GM10248 (cell line): ENCODE measurements at regions of chr21 and their contacts with region 1.

Region 1: DNA sequence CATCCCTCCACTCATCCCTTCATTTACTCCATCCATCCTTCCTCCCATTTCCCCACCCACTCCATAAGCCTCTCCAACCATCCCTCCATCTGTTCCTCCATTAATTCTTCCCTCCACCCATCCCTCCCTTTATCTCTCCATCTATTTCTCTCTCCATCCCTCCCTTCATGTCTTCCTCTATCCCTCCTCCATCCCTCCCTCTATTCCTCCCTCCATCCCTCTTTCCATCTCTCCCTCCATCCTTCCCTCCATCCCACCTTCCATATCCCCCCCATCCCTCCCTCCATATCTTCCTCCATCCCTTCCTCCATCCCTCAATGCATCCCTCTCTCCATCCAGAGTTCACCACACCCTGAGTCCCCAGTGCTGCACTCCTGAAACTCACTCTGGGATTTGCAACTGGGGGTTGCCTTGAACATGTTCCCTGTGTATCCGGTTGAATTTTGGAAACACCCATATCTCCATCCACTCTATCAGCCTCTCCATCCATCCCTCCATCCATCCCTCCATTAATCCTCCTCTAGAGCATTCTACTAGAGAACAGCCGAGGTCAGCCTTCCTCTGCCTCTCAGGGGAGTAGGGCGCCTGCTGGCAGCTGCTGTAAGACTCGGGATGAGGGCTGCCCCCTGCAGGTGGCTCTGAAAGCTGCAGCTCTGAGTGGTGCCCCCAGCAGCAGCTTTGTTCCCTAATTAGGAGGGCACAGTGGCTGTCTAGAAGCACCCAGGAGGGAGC is 39.4 kb downstream of the ABCG1 start:
- DNase-seq: peak; percentile 90
- CTCF ChIP-seq: peak; percentile 91

Region 2: DNA sequence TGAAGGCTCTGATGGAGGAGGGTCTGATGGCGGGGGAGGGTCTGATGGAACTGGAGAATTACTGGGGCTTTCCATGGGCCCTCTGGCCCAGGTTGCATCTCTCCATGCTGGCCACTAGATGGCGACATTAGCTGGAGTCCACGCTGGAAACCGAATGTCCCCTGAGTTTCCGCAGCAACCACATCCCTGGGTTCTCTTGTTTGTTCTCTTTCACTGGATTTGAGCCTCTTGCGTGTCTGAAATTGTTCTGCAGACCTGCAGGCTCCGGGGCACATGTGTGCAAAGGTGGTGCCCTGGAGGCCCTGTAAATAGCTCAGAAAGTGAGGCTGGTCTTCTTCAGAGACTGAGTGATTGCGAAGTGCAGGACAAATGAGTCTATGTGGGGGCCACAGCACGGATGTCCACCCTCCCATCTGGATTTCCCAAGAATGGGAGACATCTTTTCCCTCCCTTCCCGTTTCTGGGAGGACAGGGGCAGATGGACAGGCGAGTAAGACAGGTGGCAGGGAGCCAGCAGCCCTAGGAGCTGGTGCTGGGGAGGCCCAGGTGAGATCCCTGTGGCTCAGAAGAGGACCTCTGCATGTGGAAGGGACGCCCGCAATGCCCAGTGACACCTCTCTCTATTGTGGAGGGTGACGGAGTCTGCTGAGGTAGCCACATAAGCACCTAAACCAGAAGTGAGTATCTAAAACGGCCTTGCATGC is 112.6 kb before region 1 on chr21:
- CTCF ChIA-PET with region 1: interaction called, 58 read pairs
- POLR2A ChIA-PET with region 1: no interaction called
- DNase-seq: peak; percentile 88
- CTCF ChIP-seq: peak; percentile 89

Region 3: DNA sequence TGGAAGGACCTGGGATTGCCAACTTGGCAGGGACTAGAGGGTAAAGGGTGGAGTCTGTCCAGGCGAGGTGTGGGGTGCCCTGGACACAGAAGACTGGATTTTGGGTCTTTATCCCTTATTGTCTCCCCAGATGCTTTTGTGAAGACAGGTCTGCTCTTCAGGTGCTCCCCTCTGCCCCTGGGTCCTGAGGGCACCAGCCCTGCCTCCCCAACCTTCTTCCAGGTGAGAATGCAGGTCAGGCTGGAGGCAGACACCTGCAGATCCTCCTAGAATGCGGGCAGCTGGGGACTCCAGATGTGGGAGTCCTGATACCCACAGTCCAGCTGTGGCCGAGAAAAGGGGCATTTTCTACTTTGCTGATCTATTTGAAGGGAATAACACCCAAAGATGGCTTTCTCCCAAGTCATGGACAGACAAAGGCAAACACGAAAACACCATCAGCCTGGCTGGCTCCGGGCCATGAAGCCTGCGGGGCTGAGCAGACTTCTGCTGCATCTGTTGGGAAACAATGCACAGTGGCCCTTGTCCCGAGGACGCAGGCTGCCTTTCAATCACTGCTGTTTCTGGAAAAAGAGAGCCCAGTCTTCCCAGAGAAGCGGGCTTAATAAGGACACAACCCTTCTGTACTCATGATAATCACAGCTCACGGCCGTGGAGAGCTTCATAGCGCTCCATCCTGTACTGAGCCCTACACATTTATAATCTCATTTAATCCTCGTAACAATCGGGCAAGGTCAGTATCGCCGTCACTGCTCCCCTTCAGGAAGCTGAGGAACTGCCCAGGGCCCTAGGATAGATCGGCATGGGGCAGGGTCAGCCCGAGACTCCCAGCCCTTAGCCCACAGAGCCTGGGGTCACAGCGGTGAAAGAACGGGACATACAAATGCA is 101.4 kb before region 1 on chr21:
- CTCF ChIA-PET with region 1: interaction called, 10 read pairs
- POLR2A ChIA-PET with region 1: no interaction called
- DNase-seq: peak; percentile 15
- CTCF ChIP-seq: no peak

Region 4: DNA sequence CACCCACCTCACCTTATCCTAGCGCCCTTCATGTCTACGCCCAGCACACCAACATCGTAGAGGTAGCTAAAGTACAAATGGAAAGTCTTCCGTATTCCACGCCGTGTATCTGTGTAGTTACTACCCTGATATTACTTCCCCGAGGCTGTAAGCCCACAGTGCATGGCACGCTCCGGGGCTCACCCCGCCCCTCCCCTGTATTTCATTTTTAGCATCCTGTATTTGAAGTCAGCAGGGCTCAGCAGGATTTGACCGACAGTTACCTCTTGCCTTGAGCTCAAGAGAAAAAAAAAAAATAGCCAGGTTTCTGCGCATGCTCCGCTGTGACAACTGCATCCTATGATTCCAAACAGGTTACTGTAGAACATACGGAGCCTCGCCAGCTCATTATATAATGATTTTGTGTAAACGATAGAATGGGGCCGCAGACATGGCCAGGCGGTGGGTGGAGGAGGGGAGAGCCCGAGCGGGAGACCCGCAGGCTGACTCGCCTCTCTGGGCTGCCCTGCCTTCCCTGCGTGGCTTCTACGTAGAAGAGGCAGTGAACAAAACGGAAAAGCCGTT is 38.1 kb before region 1 on chr21:
- CTCF ChIA-PET with region 1: interaction called, 26 read pairs
- POLR2A ChIA-PET with region 1: no interaction called
- DNase-seq: peak; percentile 63
- CTCF ChIP-seq: no peak

Region 5: DNA sequence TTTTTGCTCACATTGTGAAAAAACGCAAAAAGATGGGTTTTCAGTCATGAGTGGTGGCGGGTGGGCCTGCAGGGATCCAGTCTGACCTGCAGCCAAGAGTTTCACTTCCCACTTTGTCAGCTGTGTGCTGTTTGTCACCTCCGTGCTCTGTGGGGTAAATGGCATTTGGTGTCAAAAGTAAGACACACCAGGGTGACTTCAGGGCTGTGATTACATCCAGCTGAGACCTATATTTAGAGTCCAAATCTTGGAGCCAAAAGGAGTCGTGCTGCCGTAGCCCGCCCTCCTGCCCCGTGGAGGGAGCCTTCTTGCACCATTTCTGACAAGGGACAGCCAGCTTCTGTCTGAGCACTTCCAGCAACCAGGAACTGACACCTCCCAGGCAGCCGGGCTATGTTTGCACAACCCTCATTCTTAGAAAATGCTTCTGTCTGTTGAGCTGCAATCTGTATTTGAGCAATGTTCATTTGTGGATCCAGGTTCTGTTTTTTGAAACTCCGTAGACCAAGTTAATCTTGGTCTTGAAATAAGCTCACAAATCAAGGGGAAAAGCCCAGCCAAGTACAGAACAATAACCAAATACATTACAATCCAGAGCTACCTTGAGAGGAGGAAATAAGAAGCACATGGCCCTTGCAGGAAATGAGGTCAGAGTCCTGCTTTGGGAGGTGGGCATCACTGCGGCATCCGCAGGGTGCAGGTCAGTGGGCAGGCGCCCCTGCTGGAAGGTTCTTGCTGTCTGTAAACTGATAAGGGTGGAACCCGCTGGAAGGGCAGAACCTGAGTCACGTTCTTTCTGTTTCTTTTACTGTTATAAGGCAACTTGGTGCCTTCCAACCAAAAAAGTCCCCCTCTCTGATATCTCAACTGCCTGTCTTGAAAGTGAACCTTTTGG is 25.0 kb before region 1 on chr21:
- CTCF ChIA-PET with region 1: interaction called, 83 read pairs
- POLR2A ChIA-PET with region 1: no interaction called
- DNase-seq: peak; percentile 82
- CTCF ChIP-seq: no peak

Region 6: DNA sequence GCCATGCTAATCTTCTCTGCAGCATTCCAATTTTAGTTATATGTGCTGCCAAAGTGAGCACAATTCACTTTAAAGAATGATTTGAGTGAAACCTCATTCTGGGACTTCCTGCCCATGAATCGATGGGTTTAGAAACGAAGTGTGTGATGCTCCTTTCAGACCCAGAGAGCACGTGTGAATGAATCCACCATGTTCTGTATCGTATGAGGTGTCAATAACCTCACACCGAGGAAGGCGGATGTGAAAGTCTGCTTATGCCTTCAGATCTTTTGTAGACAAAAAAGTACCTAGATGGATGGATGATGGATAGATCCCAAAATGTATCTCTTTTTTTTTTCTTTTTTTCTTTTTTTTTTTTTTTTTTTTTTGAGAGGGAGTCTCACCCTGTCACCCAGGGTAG is 159.2 kb after region 1 on chr21:
- CTCF ChIA-PET with region 1: no interaction called
- POLR2A ChIA-PET with region 1: no interaction called
- DNase-seq: no peak
- CTCF ChIP-seq: no peak